Aorta (tissue), 5 donors: ENCODE measurements at regions of chr6 and their contacts with region 1.

Region 1: GRCh38 chr6:100099189-100100074 is 105.4 kb upstream of the MCHR2 start:
- DNase-seq: no peak
- ATAC-seq: no peak
- H3K4me3 ChIP-seq: no peak overlapping the region
- H3K27ac ChIP-seq: no peak overlapping the region
- H3K4me1 ChIP-seq: no peaks in the 10 kb centered on the region
- H3K27me3 ChIP-seq: no peaks in the 10 kb centered on the region

Region 2: DNA sequence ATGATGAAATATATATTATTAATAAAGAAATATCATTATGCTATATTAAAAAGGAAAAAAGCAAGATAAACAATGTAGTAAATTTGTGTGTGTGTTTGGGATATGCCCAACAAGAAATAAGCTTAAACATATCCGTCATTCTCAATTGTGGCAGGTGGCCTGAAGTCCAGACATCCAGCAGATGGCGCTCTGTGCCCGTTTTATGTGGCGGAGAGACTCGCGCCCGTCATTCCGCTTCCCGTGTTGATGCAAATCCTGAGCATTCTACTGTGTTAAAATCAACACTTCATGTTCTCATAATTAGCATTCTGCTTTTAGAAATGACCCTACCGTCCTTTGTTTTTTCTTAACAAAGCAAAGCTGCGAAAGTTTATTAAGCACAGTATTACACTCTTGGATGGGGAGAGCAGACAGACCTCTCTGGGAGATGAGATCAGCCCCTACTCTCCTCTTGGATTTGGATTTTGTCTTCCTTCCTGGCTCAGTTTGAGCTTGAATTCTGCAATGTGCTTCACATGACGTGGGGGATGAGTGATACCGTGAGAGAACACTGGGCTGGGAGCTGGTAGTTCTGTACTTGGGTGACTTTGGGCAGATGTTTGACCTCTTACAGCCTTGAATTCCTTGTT is 231.2 kb before region 1 on chr6:
- intact Hi-C with region 1: loop called in 1 of 2 experiments (anchors 5 kb)
- DNase-seq: peak; percentile 75 to 90
- ATAC-seq: no peak
- H3K4me3 ChIP-seq: no peak overlapping the region
- H3K27ac ChIP-seq: no peak overlapping the region
- H3K4me1 ChIP-seq: no peaks in the 10 kb centered on the region
- H3K27me3 ChIP-seq: no peaks in the 10 kb centered on the region

Region 3: GRCh38 chr6:100057941-100058340 is 41.5 kb before region 1 on chr6:
- intact Hi-C with region 1: no loop called
- DNase-seq: no peak
- ATAC-seq: no peak
- H3K4me3 ChIP-seq: no peak overlapping the region
- H3K27ac ChIP-seq: no peak overlapping the region
- H3K4me1 ChIP-seq: no peaks in the 10 kb centered on the region
- H3K27me3 ChIP-seq: no peaks in the 10 kb centered on the region

Region 4: DNA sequence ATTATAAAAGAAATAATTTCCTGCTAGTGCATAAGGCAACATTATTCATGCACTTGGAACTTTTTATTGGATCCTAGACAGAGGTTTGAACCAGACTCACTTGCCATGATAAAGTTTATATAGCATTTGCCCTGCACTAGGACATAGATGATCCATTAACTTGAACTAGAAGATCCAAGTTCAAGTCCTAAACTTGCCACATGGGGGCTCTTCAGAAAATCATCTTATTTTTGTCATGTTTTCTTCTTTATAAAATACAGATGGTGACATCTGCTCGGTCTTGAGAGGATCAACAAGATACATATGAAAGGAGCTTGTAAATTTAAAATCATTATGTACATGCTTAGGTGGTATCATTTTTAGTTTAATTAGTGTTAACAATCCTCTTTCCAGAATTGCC is 270.8 kb after region 1 on chr6:
- intact Hi-C with region 1: no loop called
- DNase-seq: no peak
- ATAC-seq: no peak
- H3K4me3 ChIP-seq: no peak overlapping the region
- H3K27ac ChIP-seq: no peak overlapping the region
- H3K4me1 ChIP-seq: peaks cover 0 to 3% of the 10 kb centered on the region in 2 donors
- H3K27me3 ChIP-seq: no peaks in the 10 kb centered on the region